IMR-90 (cell line): ENCODE measurements at regions of chr6 and their contacts with region 1.

Region 1: GRCh38 chr6:73653571-73654424 is at the start of gene SLC17A5:
- DNase-seq: peak; percentile 92
- ATAC-seq: peak; percentile 98
- H3K4me3 ChIP-seq: peak within 1 kb of the TSS; percentile 78
- H3K27ac ChIP-seq: peak within 1 kb of the TSS; percentile 88
- H3K4me1 ChIP-seq: peaks cover 3% of the 10 kb centered on the region; the same call in 1 of the 2 replicates
- H3K27me3 ChIP-seq: no peaks in the 10 kb centered on the region
- CTCF ChIP-seq: no peak
- POLR2A ChIP-seq: peak; percentile 83
- RAD21 ChIP-seq: no peak
- total RNA-seq, gene SLC17A5: 27.2 and 37.5 TPM in 2 replicates

Region 2: GRCh38 chr6:73418081-73418741 is 235.6 kb before region 1 on chr6:
- CTCF ChIA-PET with region 1: no interaction called
- POLR2A ChIA-PET with region 1: no interaction called
- dilution Hi-C with region 1: no loop called
- in situ Hi-C with region 1: no loop called
- intact Hi-C with region 1: no loop called
- DNase-seq: peak; percentile 58
- ATAC-seq: peak; percentile 75
- H3K4me3 ChIP-seq: no peak overlapping the region
- H3K27ac ChIP-seq: no peak overlapping the region
- H3K4me1 ChIP-seq: peaks cover 3% of the 10 kb centered on the region; the same call in 1 of the 2 replicates
- H3K27me3 ChIP-seq: no peaks in the 10 kb centered on the region
- CTCF ChIP-seq: no peak
- POLR2A ChIP-seq: no peak
- RAD21 ChIP-seq: no peak

Region 3: DNA sequence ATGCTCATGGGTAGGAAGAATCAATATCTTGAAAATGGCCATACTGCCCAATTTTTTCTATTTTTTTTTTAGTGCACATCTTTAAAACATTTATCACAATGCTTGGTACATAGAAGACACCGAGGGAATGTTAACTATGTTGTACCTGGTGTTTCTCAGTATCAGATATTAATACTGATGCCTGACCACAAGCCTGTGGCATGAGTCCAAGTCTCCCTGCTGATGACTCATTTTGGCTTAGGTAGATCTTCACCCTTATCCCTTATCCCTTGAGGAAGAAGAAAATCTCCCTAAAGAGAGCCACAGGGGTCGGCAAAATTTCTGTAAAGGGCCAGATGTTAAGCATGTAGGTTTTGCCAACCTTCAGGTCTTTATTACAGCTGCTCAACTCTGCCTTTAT is 56.7 kb after region 1 on chr6:
- CTCF ChIA-PET with region 1: interaction called, 3 read pairs
- POLR2A ChIA-PET with region 1: interaction called, 22 read pairs
- dilution Hi-C with region 1: no loop called
- in situ Hi-C with region 1: no loop called
- intact Hi-C with region 1: no loop called
- DNase-seq: peak; percentile 68
- ATAC-seq: no peak
- H3K4me3 ChIP-seq: no peak overlapping the region
- H3K27ac ChIP-seq: no peak overlapping the region
- H3K4me1 ChIP-seq: peaks cover 14% of the 10 kb centered on the region
- H3K27me3 ChIP-seq: no peaks in the 10 kb centered on the region
- CTCF ChIP-seq: no peak
- POLR2A ChIP-seq: no peak
- RAD21 ChIP-seq: no peak